Heart right ventricle (tissue), 16 donors: ENCODE measurements at regions of chr22 and their contacts with region 1.

Region 1: DNA sequence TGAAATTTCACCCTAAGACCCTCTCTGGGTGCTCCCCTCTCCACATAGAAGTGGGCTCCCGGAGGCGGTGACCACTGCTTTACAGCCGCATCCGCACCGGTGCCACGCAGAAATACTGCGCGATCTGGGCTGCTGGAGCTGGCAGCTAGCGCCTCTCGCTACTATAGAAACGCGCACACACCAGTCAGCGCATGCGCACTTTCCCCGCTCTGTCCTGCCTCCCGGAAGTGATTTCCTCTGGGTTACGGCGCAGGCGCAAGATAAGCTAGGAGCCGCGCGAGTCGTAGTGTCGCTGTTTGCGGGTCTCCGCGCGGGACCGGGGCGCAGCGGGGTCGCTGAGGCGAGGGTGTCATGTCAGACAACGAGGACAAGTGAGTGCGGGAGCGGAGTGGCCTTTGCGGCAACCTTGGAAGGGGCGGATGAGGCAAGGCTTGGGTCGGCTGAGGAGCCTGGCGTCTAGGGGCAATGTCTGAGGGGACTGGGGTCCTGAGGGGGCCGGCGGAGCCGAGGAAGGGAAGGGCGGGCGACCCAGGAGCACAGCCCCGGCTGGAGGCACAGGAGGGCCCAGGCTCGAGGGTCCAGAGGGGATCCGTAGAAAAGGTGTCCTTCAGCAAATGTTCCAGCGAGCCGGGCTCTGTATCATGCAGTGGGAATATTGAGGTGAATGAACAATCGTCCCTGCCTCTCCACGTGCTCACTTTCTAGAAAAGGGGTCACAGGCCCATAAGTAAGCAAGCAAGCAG is at the starts of genes C22orf23 and POLR2F:
- DNase-seq: peak; percentile 96 to 97
- ATAC-seq: peak; percentile 96 to 99 (median 98)
- H3K4me3 ChIP-seq: peak within 1 kb of the TSS; percentile 52 to 98 (median 84)
- H3K27ac ChIP-seq: peak within 1 kb of the TSS in 9 of 10 donors; percentile 19 to 92 (median 71)
- H3K4me1 ChIP-seq: peaks cover 11 to 31% (median 25%) of the 10 kb centered on the region in 9 donors
- H3K27me3 ChIP-seq: peaks cover 0 to 16% (median 0%) of the 10 kb centered on the region in 7 donors
- CTCF ChIP-seq: peak in 1 of 9 donors; percentile 6
- total RNA-seq, gene C22orf23: 0.17 to 1.1 (median 0.55) TPM
- total RNA-seq, gene POLR2F: 62.4 to 95.7 (median 76.6) TPM

Region 2: DNA sequence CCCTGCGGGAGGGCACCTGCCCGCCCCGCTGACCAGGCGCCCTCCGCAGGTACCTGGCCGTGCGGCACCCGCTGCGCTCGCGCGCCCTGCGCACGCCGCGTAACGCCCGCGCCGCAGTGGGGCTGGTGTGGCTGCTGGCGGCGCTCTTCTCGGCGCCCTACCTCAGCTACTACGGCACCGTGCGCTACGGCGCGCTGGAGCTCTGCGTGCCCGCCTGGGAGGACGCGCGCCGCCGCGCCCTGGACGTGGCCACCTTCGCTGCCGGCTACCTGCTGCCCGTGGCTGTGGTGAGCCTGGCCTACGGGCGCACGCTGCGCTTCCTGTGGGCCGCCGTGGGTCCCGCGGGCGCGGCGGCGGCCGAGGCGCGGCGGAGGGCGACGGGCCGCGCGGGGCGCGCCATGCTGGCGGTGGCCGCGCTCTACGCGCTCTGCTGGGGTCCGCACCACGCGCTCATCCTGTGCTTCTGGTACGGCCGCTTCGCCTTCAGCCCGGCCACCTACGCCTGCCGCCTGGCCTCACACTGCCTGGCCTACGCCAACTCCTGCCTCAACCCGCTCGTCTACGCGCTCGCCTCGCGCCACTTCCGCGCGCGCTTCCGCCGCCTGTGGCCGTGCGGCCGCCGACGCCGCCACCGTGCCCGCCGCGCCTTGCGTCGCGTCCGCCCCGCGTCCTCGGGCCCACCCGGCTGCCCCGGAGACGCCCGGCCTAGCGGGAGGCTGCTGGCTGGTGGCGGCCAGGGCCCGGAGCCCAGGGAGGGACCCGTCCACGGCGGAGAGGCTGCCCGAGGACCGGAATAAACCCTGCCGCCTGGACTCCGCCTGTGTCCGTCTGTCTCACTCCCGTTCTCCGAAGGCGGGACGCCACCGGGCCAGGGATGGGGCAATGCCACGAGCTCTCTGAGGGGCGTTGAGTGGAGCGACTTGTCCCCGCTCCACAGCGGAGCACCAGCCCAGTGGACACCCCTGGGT is 128.7 kb before region 1 on chr22:
- intact Hi-C with region 1: loop called in 1 of 10 experiments (anchors 5 kb)
- DNase-seq: no peak
- ATAC-seq: peak in 2 of 8 donors; percentile 13 to 27
- H3K4me3 ChIP-seq: peak overlapping the region in 7 of 10 donors; percentile 13 to 42 (median 32)
- H3K27ac ChIP-seq: no peak overlapping the region
- H3K4me1 ChIP-seq: peaks cover 0 to 20% (median 8%) of the 10 kb centered on the region in 9 donors
- H3K27me3 ChIP-seq: peaks cover 0 to 45% (median 30%) of the 10 kb centered on the region in 7 donors
- CTCF ChIP-seq: no peak

Region 3: GRCh38 chr22:37905534-37906363 is 47.9 kb before region 1 on chr22 and contains the start of gene MICALL1:
- intact Hi-C with region 1: loop called in 1 of 10 experiments (anchors 10 kb)
- DNase-seq: peak; percentile 67 to 79
- ATAC-seq: peak; percentile 75 to 91 (median 80)
- H3K4me3 ChIP-seq: peak within 1 kb of the TSS; percentile 49 to 99 (median 70)
- H3K27ac ChIP-seq: peak within 1 kb of the TSS; percentile 78 to 94 (median 88)
- H3K4me1 ChIP-seq: peaks cover 5 to 50% (median 27%) of the 10 kb centered on the region in 9 donors
- H3K27me3 ChIP-seq: no peaks in the 10 kb centered on the region
- CTCF ChIP-seq: peak in 6 of 9 donors; percentile 5 to 63 (median 32)
- total RNA-seq, gene MICALL1: 13.0 to 26.9 (median 16.5) TPM

Region 4: DNA sequence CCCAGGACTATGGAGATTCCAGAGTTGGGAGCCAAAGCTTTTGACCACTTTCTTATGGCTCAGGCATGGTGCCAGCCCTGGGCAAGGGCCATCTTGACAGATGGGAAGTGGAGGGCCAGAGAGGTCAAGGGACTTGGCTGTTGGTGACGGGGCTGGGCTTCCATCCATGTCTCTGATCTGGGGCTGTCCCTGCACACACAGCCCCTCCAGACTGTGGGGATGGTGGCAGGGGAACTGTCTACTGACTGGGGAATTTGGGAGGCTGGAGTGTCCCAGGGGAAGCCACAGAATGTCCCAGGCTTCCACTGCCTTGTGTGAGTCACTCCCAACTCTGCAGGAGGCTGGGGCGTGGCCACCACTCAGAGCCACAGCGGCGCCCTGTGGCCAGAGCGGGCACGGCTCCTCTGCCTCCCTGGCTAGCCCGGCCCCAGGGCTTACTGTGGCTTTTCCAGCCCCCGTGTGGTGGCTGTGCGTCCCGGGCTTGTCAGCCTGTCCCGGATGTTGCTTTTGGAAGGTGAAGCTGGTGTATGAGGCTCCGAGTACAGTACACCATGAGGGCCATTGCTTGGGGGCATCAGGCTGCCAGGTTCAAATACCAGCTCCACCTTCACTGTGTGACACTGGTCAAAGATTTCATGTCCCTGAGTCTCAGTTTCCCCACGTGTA is 19.8 kb before region 1 on chr22:
- intact Hi-C with region 1: no loop called
- DNase-seq: peak; percentile 89 to 90
- ATAC-seq: peak; percentile 94 to 98 (median 97)
- H3K4me3 ChIP-seq: no peak overlapping the region
- H3K27ac ChIP-seq: peak overlapping the region in 9 of 10 donors; percentile 31 to 80 (median 57)
- H3K4me1 ChIP-seq: peaks cover 7 to 46% (median 30%) of the 10 kb centered on the region in 9 donors
- H3K27me3 ChIP-seq: no peaks in the 10 kb centered on the region
- CTCF ChIP-seq: peak; percentile 90 to 100 (median 98)